CD8-positive, alpha-beta T cell (primary cell): ENCODE measurements at regions of chr1 and their contacts with region 1.

Region 1: DNA sequence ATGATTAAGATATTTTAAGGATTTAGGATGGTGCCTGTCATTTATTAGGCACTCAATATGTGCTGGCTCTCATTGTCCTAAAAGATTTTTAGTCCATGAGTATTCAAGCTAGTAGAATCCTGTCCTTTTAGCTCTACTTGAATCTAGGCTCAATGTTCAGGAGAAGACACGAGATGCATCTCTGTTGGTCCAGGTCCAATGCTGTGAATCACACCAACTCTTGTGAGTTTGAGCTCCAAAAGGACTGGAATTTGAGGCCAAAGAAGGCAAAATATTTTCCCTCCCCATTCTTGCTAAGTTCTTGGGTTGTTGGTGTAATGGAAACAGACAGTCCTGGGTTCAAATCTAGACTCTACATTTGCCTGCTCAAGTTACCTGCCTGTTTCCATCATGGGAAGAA is 1.4 kb upstream of the PODN start:
- DNase-seq: no peak
- ATAC-seq: no peak
- H3K4me3 ChIP-seq: no peak overlapping the region
- H3K4me3 Mint-ChIP-seq: no peak overlapping the region
- H3K27ac ChIP-seq: no peak overlapping the region
- H3K27ac Mint-ChIP-seq: no peak overlapping the region
- H3K4me1 ChIP-seq: peaks cover 9% of the 10 kb centered on the region
- H3K4me1 Mint-ChIP-seq: peaks cover 12% of the 10 kb centered on the region
- H3K27me3 ChIP-seq: peaks cover 11 to 15% of the 10 kb centered on the region in 2 experiments
- H3K27me3 Mint-ChIP-seq: peaks cover 24% of the 10 kb centered on the region
- CTCF ChIP-seq: no peak

Region 2: DNA sequence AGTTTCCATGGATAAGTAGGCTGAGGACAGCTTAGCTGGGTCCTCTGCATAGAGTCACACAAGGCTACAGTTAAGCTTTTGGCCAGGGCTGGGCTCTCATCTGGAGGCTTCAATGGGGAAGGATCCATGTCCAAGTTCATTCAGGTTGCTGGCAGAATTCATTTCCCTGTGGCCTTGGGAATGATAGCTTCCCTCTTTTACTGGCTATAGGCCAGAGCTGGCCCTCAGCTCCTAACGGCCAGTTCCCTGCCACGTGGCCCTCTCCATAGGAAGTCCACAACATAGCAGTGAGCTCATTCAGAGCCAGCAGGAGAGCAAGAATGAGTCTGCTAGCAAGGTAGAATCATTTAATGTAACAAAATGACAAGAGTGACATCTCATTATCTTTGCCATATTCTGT is 13.7 kb before region 1 on chr1:
- CTCF ChIA-PET with region 1: no interaction called
- POLR2A ChIA-PET with region 1: interaction called, 4 read pairs
- intact Hi-C with region 1: loop called in 1 of 2 experiments (anchors 1 kb)
- DNase-seq: no peak
- ATAC-seq: no peak
- H3K4me3 ChIP-seq: no peak overlapping the region
- H3K4me3 Mint-ChIP-seq: no peak overlapping the region
- H3K27ac ChIP-seq: no peak overlapping the region
- H3K27ac Mint-ChIP-seq: peak overlapping the region; percentile 25
- H3K4me1 ChIP-seq: no peaks in the 10 kb centered on the region
- H3K4me1 Mint-ChIP-seq: no peaks in the 10 kb centered on the region
- H3K27me3 ChIP-seq: no peaks in the 10 kb centered on the region
- H3K27me3 Mint-ChIP-seq: no peaks in the 10 kb centered on the region
- CTCF ChIP-seq: no peak

Region 3: GRCh38 chr1:53172426-53173128 is 112.0 kb after region 1 on chr1:
- CTCF ChIA-PET with region 1: no interaction called
- POLR2A ChIA-PET with region 1: no interaction called
- intact Hi-C with region 1: no loop called
- DNase-seq: peak in 1 of 9 experiments; percentile 47
- ATAC-seq: peak; percentile 40
- H3K4me3 ChIP-seq: no peak overlapping the region
- H3K4me3 Mint-ChIP-seq: no peak overlapping the region
- H3K27ac ChIP-seq: no peak overlapping the region
- H3K27ac Mint-ChIP-seq: no peak overlapping the region
- H3K4me1 ChIP-seq: no peaks in the 10 kb centered on the region
- H3K4me1 Mint-ChIP-seq: peaks cover 3% of the 10 kb centered on the region
- H3K27me3 ChIP-seq: no peaks in the 10 kb centered on the region
- H3K27me3 Mint-ChIP-seq: peaks cover 19% of the 10 kb centered on the region
- CTCF ChIP-seq: no peak